HEK293 (cell line): ENCODE measurements at regions of chr10 and their contacts with region 1.

Region 1: GRCh38 chr10:126759531-126759930 is 89.0 kb upstream of the C10orf90 start:
- H3K4me3 ChIP-seq: no peak overlapping the region
- H3K27ac ChIP-seq: no peak overlapping the region
- H3K4me1 ChIP-seq: no peaks in the 10 kb centered on the region
- CTCF ChIP-seq: no peak

Region 2: GRCh38 chr10:127081851-127082345 is 322.4 kb after region 1 on chr10:
- CTCF ChIA-PET with region 1: no interaction called
- POLR2A ChIA-PET with region 1: interaction called, 10 read pairs
- H3K4me3 ChIP-seq: no peak overlapping the region
- H3K27ac ChIP-seq: no peak overlapping the region
- H3K4me1 ChIP-seq: no peaks in the 10 kb centered on the region
- CTCF ChIP-seq: no peak